Heart left ventricle (tissue), 16 donors: ENCODE measurements at regions of chr15 and their contacts with region 1.

Region 1: DNA sequence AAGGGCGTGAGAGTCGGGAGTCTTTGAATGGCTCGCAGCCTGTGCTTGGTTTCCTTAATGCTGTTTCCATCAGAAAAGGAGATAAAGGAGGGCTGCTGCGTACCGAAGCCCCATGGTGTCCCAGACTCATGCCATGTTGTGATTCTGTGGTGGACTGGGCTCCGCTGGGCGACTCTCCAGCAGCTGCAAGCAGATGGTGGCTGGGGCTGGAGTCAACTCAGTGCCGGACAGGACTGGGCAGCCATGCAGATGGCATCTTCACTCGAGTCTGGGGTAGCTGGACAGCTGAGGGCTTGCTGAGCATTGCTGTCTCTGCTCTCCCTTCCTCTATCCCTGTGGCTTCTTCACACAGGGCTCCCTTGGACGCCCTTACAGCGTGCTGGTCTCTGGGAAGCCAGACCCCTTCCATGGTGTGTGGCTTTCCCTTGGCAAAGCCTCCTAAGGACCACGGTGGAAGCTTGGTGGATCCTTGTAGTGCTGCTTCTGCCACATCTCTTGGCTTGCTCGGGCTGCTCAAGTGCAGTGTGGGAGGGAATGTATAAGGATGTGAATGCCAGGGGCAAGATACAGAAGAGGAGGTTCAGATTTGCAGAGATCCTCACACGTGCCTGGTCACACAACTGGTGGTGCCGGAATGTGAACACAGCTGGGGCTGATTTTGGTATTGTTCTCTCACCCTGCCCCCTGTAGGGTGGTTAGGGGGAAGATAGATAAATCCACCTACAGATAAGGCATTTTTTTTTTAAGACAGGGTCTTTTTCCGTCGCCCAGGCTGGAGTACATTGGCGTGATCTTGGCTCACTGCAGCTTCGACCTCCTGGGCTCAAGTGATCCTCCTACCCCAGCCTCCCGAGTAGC is 9.0 kb downstream of the NIPA1 start:
- DNase-seq: no peak
- ATAC-seq: peak in 1 of 4 donors; percentile 33
- H3K4me3 ChIP-seq: no peak overlapping the region
- H3K27ac ChIP-seq: no peak overlapping the region
- H3K4me1 ChIP-seq: no peaks in the 10 kb centered on the region
- H3K27me3 ChIP-seq: no peaks in the 10 kb centered on the region
- CTCF ChIP-seq: no peak
- POLR2A ChIP-seq: no peak

Region 2: DNA sequence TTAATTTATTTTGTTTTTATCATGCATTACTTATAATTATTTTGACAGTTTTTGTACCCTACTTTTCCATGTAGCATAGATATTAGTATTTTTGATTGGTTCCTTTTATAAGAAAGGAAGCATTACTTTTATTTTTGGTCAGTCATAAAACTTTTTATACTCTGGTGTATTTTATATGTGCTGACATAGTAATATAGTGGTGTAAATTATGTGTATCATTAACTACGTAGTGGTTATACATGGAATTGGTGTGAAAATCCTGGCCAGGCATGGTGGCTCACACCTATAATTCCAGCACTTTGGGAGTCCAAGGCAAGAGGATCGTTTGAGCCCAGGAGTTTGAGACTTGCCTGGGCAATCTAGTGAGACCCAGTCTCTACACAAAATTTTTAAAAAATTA is 24.2 kb after region 1 on chr15:
- intact Hi-C with region 1: loop called in 1 of 10 experiments (anchors 2 kb)
- DNase-seq: no peak
- ATAC-seq: no peak
- H3K4me3 ChIP-seq: no peak overlapping the region
- H3K27ac ChIP-seq: no peak overlapping the region
- H3K4me1 ChIP-seq: no peaks in the 10 kb centered on the region
- H3K27me3 ChIP-seq: no peaks in the 10 kb centered on the region
- CTCF ChIP-seq: no peak
- POLR2A ChIP-seq: no peak

Region 3: GRCh38 chr15:22845289-22845900 is 50.0 kb after region 1 on chr15:
- intact Hi-C with region 1: no loop called
- DNase-seq: no peak
- ATAC-seq: no peak
- H3K4me3 ChIP-seq: no peak overlapping the region
- H3K27ac ChIP-seq: no peak overlapping the region
- H3K4me1 ChIP-seq: peaks cover 0 to 15% (median 10%) of the 10 kb centered on the region in 12 donors
- H3K27me3 ChIP-seq: no peaks in the 10 kb centered on the region
- CTCF ChIP-seq: no peak
- POLR2A ChIP-seq: no peak